ENCODE measurements at regions of chr17 and their contacts with region 1.

Region 1: GRCh38 chr17:12545877-12546513 is 119.7 kb upstream of the MYOCD start:
- DNase-seq: peak; percentile 43
- H3K4me3 Mint-ChIP-seq: no peak overlapping the region
- H3K27ac Mint-ChIP-seq: no peak overlapping the region
- H3K4me1 Mint-ChIP-seq: no peaks in the 10 kb centered on the region
- H3K27me3 Mint-ChIP-seq: no peaks in the 10 kb centered on the region
- CTCF ChIP-seq: peak; percentile 74

Region 2: GRCh38 chr17:12478311-12478710 is 67.7 kb before region 1 on chr17:
- CTCF ChIA-PET with region 1: no interaction called
- intact Hi-C with region 1: no loop called
- DNase-seq: no peak
- H3K4me3 Mint-ChIP-seq: no peak overlapping the region
- H3K27ac Mint-ChIP-seq: no peak overlapping the region
- H3K4me1 Mint-ChIP-seq: no peaks in the 10 kb centered on the region
- H3K27me3 Mint-ChIP-seq: no peaks in the 10 kb centered on the region
- CTCF ChIP-seq: no peak

Region 3: DNA sequence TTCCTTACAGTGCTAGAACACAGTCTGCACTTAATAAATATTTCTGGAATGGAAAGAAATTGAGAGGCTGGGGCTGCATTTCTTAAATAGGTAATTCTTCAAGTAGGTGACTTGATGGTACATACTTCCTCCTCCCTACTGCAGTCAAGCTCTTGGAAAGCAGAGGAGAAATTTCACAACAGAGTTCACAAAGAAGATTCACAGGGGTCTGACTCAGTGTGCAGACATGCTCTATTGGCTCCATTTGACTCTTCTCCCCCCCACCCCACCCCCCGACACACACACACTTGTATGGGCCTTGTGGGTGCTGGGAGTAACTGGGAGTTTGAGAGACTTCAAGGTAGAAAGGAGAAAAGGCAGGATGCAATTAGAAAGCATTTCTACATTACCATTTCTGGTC is 113.5 kb after region 1 on chr17:
- CTCF ChIA-PET with region 1: interaction called, 12 read pairs
- intact Hi-C with region 1: loop called (anchors 10 kb)
- DNase-seq: no peak
- H3K4me3 Mint-ChIP-seq: no peak overlapping the region
- H3K27ac Mint-ChIP-seq: no peak overlapping the region
- H3K4me1 Mint-ChIP-seq: no peaks in the 10 kb centered on the region
- H3K27me3 Mint-ChIP-seq: peaks cover 26% of the 10 kb centered on the region
- CTCF ChIP-seq: no peak

Region 4: GRCh38 chr17:12667299-12667958 is 121.4 kb after region 1 on chr17:
- CTCF ChIA-PET with region 1: interaction called, 7 read pairs
- intact Hi-C with region 1: loop called (anchors 10 kb)
- DNase-seq: peak; percentile 38
- H3K4me3 Mint-ChIP-seq: no peak overlapping the region
- H3K27ac Mint-ChIP-seq: no peak overlapping the region
- H3K4me1 Mint-ChIP-seq: no peaks in the 10 kb centered on the region
- H3K27me3 Mint-ChIP-seq: peaks cover 39% of the 10 kb centered on the region
- CTCF ChIP-seq: no peak

Region 5: GRCh38 chr17:12744298-12744697 is 198.3 kb after region 1 on chr17:
- CTCF ChIA-PET with region 1: interaction called, 12 read pairs
- intact Hi-C with region 1: loop called (anchors 2 kb)
- DNase-seq: peak; percentile 39
- H3K4me3 Mint-ChIP-seq: no peak overlapping the region
- H3K27ac Mint-ChIP-seq: peak overlapping the region; percentile 39
- H3K4me1 Mint-ChIP-seq: peaks cover 48% of the 10 kb centered on the region
- H3K27me3 Mint-ChIP-seq: no peaks in the 10 kb centered on the region
- CTCF ChIP-seq: no peak

Region 6: GRCh38 chr17:13002766-13003451 is 456.9 kb after region 1 on chr17:
- CTCF ChIA-PET with region 1: no interaction called
- intact Hi-C with region 1: loop called (anchors 5 kb)
- DNase-seq: peak; percentile 60
- H3K4me3 Mint-ChIP-seq: no peak overlapping the region
- H3K27ac Mint-ChIP-seq: no peak overlapping the region
- H3K4me1 Mint-ChIP-seq: no peaks in the 10 kb centered on the region
- H3K27me3 Mint-ChIP-seq: no peaks in the 10 kb centered on the region
- CTCF ChIP-seq: peak; percentile 67